Cardiac septum (tissue), 1 donor: ENCODE measurements at regions of chr6 and their contacts with region 1.

Region 1: GRCh38 chr6:163419413-163420288 is 5.1 kb downstream of the QKI start:
- DNase-seq: no peak

Region 2: GRCh38 chr6:163965426-163966348 is 546.0 kb after region 1 on chr6:
- intact Hi-C with region 1: loop called (anchors 2 kb)
- DNase-seq: no peak